Caco-2 (cell line): ENCODE measurements at regions of chr6 and their contacts with region 1.

Region 1: GRCh38 chr6:138503881-138504680 is 4.8 kb upstream of the NHSL1 start:
- DNase-seq: peak; percentile 69 to 73
- H3K4me3 ChIP-seq: no peak overlapping the region
- H3K4me3 Mint-ChIP-seq: peak overlapping the region; percentile 32
- H3K27ac Mint-ChIP-seq: peak overlapping the region; percentile 40
- H3K4me1 ChIP-seq: peaks cover 88% of the 10 kb centered on the region
- H3K4me1 Mint-ChIP-seq: peaks cover 46% of the 10 kb centered on the region
- H3K27me3 ChIP-seq: no peaks in the 10 kb centered on the region
- H3K27me3 Mint-ChIP-seq: no peaks in the 10 kb centered on the region
- CTCF ChIP-seq: no peak

Region 2: GRCh38 chr6:138393871-138394783 is 110.0 kb before region 1 on chr6:
- CTCF ChIA-PET with region 1: no interaction called
- POLR2A ChIA-PET with region 1: no interaction called
- intact Hi-C with region 1: no loop called
- DNase-seq: no peak
- H3K4me3 ChIP-seq: no peak overlapping the region
- H3K4me3 Mint-ChIP-seq: no peak overlapping the region
- H3K27ac Mint-ChIP-seq: peak overlapping the region; percentile 7
- H3K4me1 ChIP-seq: peaks cover 3% of the 10 kb centered on the region; the same call in 1 of the 2 replicates
- H3K4me1 Mint-ChIP-seq: peaks cover 6% of the 10 kb centered on the region
- H3K27me3 ChIP-seq: no peaks in the 10 kb centered on the region
- H3K27me3 Mint-ChIP-seq: no peaks in the 10 kb centered on the region
- CTCF ChIP-seq: no peak

Region 3: GRCh38 chr6:138468316-138469008 is 35.6 kb before region 1 on chr6:
- CTCF ChIA-PET with region 1: interaction called, 4 read pairs
- POLR2A ChIA-PET with region 1: no interaction called
- intact Hi-C with region 1: loop called (anchors 1 kb)
- DNase-seq: peak in 1 of 2 experiments; percentile 37
- H3K4me3 ChIP-seq: no peak overlapping the region
- H3K4me3 Mint-ChIP-seq: no peak overlapping the region
- H3K27ac Mint-ChIP-seq: peak overlapping the region; percentile 54
- H3K4me1 ChIP-seq: peaks cover 23% of the 10 kb centered on the region; the same call in 1 of the 2 replicates
- H3K4me1 Mint-ChIP-seq: peaks cover 19% of the 10 kb centered on the region
- H3K27me3 ChIP-seq: no peaks in the 10 kb centered on the region
- H3K27me3 Mint-ChIP-seq: no peaks in the 10 kb centered on the region
- CTCF ChIP-seq: no peak

Region 4: DNA sequence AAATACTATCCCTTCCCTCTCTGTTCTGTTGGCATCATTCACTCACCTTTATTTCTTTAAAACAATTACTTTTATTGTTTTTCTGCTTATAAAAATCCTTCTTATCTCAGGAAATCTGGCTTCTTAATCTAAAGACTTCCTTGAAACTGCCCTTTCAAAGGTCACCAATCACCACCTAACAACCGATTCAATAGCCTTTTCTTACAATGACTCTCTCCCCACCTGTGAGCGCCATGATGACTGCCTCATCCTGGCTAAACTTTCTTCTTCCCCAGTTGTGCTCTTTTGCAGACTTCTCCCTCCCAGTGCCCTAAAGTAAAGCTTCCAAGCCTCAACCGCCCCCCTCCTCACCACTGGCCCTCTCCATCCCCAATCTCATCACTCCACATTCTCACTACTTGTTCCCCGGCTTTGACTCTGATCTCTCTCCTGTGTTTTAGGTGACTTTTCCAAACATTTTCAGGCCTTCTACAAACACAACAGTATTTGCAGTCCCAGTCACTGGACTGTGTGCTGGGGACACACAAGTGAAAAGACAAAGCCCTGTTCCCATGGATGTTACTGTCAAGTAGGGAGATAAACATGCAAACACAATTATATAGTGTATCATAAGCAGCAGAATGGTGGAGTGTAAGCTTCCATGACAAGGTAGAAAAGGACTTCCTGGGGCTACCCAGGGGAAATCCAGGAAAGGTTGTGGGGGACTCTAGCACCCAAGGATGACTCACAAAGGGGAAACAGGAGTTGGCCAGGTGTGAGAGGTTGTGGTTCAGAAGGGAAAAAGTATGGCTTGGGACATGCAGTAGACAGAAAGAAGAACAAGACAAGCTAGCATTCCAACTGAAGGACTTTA is 17.6 kb before region 1 on chr6:
- CTCF ChIA-PET with region 1: no interaction called
- POLR2A ChIA-PET with region 1: no interaction called
- intact Hi-C with region 1: loop called (anchors 2 kb)
- DNase-seq: no peak
- H3K4me3 ChIP-seq: no peak overlapping the region
- H3K4me3 Mint-ChIP-seq: no peak overlapping the region
- H3K27ac Mint-ChIP-seq: peak overlapping the region; percentile 46
- H3K4me1 ChIP-seq: peaks cover 22% of the 10 kb centered on the region
- H3K4me1 Mint-ChIP-seq: peaks cover 29% of the 10 kb centered on the region
- H3K27me3 ChIP-seq: no peaks in the 10 kb centered on the region
- H3K27me3 Mint-ChIP-seq: no peaks in the 10 kb centered on the region
- CTCF ChIP-seq: no peak

Region 5: GRCh38 chr6:138550346-138550767 is 46.3 kb after region 1 on chr6:
- CTCF ChIA-PET with region 1: no interaction called
- POLR2A ChIA-PET with region 1: interaction called, 3 read pairs
- intact Hi-C with region 1: loop called (anchors 2 kb)
- DNase-seq: peak; percentile 64 to 72
- H3K4me3 ChIP-seq: no peak overlapping the region
- H3K4me3 Mint-ChIP-seq: peak overlapping the region; percentile 46
- H3K27ac Mint-ChIP-seq: peak overlapping the region; percentile 99
- H3K4me1 ChIP-seq: peaks cover 83% of the 10 kb centered on the region
- H3K4me1 Mint-ChIP-seq: peaks cover 63% of the 10 kb centered on the region
- H3K27me3 ChIP-seq: no peaks in the 10 kb centered on the region
- H3K27me3 Mint-ChIP-seq: no peaks in the 10 kb centered on the region
- CTCF ChIP-seq: no peak

Region 6: DNA sequence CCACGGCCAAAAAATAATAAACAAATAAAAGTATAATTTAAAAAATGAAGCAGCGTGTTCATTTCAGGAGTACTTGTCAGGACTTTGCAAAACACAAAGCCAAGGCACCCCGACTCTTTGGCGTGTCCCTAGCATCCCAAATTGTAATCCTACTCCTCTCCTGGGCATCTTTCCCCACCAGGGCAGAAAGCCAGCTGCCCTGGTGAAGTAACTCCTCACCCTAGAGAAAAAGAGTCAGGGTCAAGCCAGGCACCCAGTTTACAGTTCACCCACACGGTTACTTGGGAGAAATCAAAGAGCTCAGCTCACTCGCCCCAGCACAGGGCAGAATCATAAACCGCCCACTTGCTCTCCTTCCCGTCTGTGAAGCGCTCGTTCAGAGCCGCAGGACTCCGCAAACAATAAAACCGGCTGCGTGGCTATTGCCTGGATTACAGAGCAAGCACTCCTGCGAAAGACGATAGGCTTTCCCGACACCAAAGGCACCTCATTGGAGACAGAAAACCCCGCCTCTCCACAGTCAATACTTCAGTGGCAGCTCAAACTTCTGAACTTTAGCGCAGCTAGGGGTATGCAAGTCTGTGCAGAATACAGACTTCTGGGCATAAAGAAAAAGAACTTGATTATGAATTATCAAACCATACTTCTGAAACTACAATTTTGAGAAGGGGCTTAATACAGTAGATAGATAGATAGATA is 68.2 kb after region 1 on chr6:
- CTCF ChIA-PET with region 1: no interaction called
- POLR2A ChIA-PET with region 1: no interaction called
- intact Hi-C with region 1: loop called (anchors 2 kb)
- DNase-seq: peak; percentile 89 to 91
- H3K4me3 ChIP-seq: peak overlapping the region; percentile 58
- H3K4me3 Mint-ChIP-seq: no peak overlapping the region
- H3K27ac Mint-ChIP-seq: no peak overlapping the region
- H3K4me1 ChIP-seq: peaks cover 14% of the 10 kb centered on the region; the same call in 1 of the 2 replicates
- H3K4me1 Mint-ChIP-seq: peaks cover 7% of the 10 kb centered on the region
- H3K27me3 ChIP-seq: no peaks in the 10 kb centered on the region
- H3K27me3 Mint-ChIP-seq: no peaks in the 10 kb centered on the region
- CTCF ChIP-seq: no peak